PC-3 (cell line): ENCODE measurements at regions of chr4 and their contacts with region 1.

Region 1: GRCh38 chr4:185640811-185641675 is 105.7 kb upstream of the PDLIM3 start:
- DNase-seq: peak; percentile 74
- ATAC-seq: peak; percentile 42; the same call in 1 of the 2 replicates
- H3K4me3 ChIP-seq: no peak overlapping the region
- H3K27ac ChIP-seq: no peak overlapping the region
- H3K4me1 ChIP-seq: no peaks in the 10 kb centered on the region
- H3K27me3 ChIP-seq: no peaks in the 10 kb centered on the region
- CTCF ChIP-seq: peak; percentile 68

Region 2: DNA sequence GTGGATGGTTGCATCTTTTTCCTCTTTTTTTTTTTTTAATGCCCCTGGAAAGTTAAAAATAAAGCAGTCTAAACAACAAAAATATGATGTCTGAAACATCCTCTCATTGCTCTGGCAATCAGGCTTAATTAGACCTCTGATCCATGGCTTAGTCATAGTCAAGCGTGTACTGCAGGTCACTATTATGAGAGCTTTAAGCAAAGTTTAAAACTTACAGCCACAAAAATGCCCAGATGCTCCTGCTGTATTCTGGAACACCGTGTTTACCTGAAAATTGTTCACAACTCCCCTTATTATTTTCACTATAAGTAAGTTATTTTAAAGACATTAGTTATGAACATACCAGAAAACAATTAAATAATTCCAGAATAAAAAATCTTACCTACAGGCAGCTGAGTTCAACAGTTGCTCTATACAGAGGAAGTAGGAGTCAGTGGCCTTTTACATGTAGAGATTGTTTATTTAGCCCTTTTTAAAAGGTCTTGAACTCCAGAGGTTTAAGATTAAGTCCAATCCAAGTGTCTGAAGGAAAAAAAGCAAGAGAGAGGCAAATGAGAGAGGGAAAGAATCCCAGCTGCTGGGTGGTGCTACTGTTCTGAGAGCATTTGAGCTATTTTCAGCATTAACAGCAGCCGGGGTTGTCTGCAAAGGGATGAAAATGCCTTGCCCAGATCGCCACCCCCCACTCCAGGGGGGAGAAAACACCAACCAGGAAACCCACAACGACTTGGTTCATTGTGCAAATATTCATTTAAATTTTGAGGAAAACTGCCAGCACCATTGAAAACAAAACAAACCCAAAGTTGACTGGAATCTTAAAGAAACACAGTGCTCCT is 134.0 kb after region 1 on chr4:
- CTCF ChIA-PET with region 1: no interaction called
- POLR2A ChIA-PET with region 1: no interaction called
- intact Hi-C with region 1: loop called (anchors 10 kb)
- DNase-seq: peak; percentile 66
- ATAC-seq: peak; percentile 86
- H3K4me3 ChIP-seq: peak overlapping the region; percentile 59
- H3K27ac ChIP-seq: peak overlapping the region; percentile 65
- H3K4me1 ChIP-seq: peaks cover 32% of the 10 kb centered on the region
- H3K27me3 ChIP-seq: no peaks in the 10 kb centered on the region
- CTCF ChIP-seq: no peak

Region 3: GRCh38 chr4:185817403-185817818 is 176.4 kb after region 1 on chr4:
- CTCF ChIA-PET with region 1: no interaction called
- POLR2A ChIA-PET with region 1: no interaction called
- intact Hi-C with region 1: no loop called
- DNase-seq: no peak
- ATAC-seq: no peak
- H3K4me3 ChIP-seq: no peak overlapping the region
- H3K27ac ChIP-seq: no peak overlapping the region
- H3K4me1 ChIP-seq: no peaks in the 10 kb centered on the region
- H3K27me3 ChIP-seq: no peaks in the 10 kb centered on the region
- CTCF ChIP-seq: no peak

Region 4: DNA sequence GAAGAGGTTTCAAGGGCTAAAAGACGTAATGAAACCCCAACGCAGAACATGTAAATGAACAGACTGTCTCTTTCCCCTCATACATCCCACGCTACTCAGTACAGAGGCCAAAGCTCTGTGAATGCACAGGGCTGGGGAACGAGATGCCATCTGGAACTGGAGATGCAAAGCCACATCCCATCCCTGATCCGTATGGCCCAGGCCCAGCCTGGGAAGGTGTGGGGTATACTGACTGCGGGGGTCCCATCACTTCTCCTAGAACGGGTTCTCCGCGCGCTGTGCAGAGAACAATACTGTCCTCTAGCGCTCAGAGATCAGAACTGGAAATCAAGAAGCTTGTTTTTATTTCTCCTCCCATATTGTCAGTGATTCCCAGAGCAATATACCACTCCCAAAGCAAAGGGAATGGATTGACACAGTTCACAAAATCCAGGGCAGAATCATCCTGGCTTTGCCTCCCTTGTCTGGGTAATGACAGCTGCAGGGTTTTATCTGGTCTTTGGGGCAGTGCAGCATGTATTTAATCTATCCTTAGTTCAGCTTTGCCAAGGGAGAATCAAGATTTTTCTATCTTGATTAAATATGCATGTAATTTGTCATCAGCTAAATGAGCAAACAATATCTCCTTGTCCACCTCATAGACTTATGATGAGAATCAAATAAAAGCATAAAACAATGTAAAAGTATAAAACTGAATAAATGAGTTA is 380.6 kb after region 1 on chr4:
- CTCF ChIA-PET with region 1: interaction called, 16 read pairs
- POLR2A ChIA-PET with region 1: no interaction called
- intact Hi-C with region 1: loop called (anchors 1 kb)
- DNase-seq: peak; percentile 44
- ATAC-seq: peak; percentile 55
- H3K4me3 ChIP-seq: no peak overlapping the region
- H3K27ac ChIP-seq: no peak overlapping the region
- H3K4me1 ChIP-seq: no peaks in the 10 kb centered on the region
- H3K27me3 ChIP-seq: no peaks in the 10 kb centered on the region
- CTCF ChIP-seq: peak; percentile 80

Region 5: GRCh38 chr4:186037692-186038658 is 396.9 kb after region 1 on chr4:
- CTCF ChIA-PET with region 1: interaction called, 11 read pairs
- POLR2A ChIA-PET with region 1: no interaction called
- intact Hi-C with region 1: loop called (anchors 2 kb)
- DNase-seq: peak; percentile 80
- ATAC-seq: peak; percentile 66
- H3K4me3 ChIP-seq: no peak overlapping the region
- H3K27ac ChIP-seq: no peak overlapping the region
- H3K4me1 ChIP-seq: no peaks in the 10 kb centered on the region
- H3K27me3 ChIP-seq: peaks cover 2% of the 10 kb centered on the region
- CTCF ChIP-seq: peak; percentile 78

Region 6: GRCh38 chr4:186137196-186137794 is 496.3 kb after region 1 on chr4:
- CTCF ChIA-PET with region 1: interaction called, 3 read pairs
- POLR2A ChIA-PET with region 1: no interaction called
- intact Hi-C with region 1: loop called (anchors 2 kb)
- DNase-seq: peak; percentile 45
- ATAC-seq: peak; percentile 50; the same call in 1 of the 2 replicates
- H3K4me3 ChIP-seq: peak overlapping the region; percentile 41; the same call in 1 of the 2 replicates
- H3K27ac ChIP-seq: no peak overlapping the region
- H3K4me1 ChIP-seq: no peaks in the 10 kb centered on the region
- H3K27me3 ChIP-seq: no peaks in the 10 kb centered on the region
- CTCF ChIP-seq: peak; percentile 65